Mammary epithelial cell (primary cell): ENCODE measurements at regions of chr12 and their contacts with region 1.

Region 1: DNA sequence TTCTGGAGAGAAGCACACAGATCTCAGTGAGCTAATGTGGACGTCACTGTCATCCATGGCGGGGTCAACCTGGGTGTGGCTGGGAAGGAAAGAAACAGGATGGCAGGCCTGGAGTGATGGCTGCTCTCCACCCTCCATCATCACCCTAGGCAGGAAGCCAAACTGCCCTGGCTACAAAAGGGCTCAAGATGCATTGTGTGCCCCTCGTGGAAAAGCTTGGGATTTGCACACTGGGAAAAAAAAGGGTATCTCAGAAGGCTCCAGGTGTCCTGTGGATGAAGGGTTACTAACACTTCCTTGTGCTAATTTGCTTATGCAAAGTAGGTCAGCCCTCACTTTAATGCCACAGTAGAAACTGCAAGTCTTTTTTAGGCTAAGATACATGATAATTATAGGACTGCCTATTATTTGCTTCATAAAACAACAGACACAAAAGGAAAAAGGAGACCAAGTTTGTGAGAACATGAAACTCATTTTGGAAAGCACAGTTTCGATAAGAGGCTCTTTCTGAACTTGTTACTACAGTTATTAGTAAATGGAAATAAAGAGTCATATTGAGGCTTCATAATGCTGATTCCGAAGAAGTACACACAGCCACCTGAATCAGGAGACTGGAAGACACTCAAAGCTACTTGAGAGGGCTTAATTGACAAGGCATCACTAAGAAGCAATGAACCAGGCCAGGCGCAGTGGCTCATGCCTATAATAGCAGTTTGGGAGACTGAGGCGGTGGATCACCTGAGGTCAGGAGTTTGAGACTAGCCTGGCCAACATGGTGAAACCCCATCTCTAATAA is 18.9 kb downstream of the RFC5 start:
- DNase-seq: no peak
- H3K4me3 ChIP-seq: no peak overlapping the region
- H3K27ac ChIP-seq: no peak overlapping the region
- H3K4me1 ChIP-seq: no peaks in the 10 kb centered on the region
- H3K27me3 ChIP-seq: no peaks in the 10 kb centered on the region
- CTCF ChIP-seq: peak in 1 of 2 donors; percentile 17

Region 2: DNA sequence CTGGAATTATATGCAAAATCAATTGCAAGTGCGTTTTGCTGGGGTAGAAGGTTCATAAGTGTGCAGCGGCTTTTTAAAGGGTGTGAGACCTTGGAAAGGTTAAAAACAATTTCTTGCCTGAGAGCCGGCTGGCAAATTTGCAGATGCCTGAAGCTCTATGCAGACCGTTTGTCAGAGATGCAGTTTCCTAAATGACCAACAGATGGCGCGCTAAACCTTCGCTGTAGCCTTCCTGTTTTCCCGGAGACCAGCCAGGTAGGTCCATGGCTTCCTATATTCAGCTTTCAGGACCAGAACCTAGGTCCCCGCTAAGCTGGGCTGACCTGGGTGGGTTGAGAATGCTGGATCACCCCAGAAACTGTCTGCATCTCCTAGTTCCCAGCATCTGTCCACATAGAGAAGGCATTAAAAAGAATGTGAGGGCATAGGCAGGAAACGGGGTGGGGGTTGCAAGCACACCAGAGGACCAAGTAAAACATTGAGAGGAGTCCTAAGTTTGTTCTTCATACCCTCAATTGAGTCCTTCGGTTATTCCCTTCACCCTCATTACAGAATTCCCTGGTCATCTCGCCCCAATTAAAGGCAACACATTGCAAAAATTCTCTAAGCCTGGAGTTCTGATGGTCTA is 668.3 kb before region 1 on chr12:
- CTCF ChIA-PET with region 1: no interaction called
- dilution Hi-C with region 1: no loop called
- in situ Hi-C with region 1: no loop called
- intact Hi-C with region 1: no loop called
- DNase-seq: peak; percentile 55
- H3K4me3 ChIP-seq: no peak overlapping the region
- H3K27ac ChIP-seq: no peak overlapping the region
- H3K4me1 ChIP-seq: no peaks in the 10 kb centered on the region
- H3K27me3 ChIP-seq: peaks cover 3% of the 10 kb centered on the region
- CTCF ChIP-seq: peak; percentile 91 to 93

Region 3: DNA sequence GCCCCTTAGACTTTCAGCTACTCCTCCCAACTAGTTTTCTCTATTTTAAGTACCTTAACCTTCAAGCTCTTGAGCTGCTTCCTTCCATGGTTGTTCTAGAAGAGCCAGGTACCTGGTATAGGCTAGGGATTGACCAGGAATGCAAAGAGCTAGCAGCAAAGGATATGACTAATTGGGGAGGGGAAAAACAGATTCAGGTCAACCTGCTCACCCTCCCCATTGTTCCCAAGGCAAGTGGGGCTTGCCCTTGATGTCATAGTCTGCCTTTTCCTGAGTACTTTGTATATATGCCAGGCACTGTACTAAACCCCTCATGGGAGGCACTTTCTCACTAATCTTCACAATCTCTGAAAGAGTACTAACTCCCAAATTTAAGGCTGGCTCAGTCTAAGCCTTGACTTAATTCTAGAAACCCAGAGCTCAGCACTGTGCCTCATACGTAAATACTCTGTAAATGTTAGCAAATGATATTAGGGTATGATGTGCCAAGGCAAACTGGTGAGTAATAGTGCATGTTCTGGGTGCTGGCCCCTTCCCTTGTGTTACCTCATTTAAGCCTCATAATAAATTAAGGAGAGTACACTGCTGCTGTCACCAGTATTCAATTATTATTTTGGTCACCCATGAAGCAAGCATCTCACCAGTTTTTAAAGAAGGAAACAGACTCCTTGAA is 383.1 kb after region 1 on chr12:
- CTCF ChIA-PET with region 1: no interaction called
- dilution Hi-C with region 1: no loop called
- in situ Hi-C with region 1: no loop called
- intact Hi-C with region 1: no loop called
- DNase-seq: peak; percentile 64
- H3K4me3 ChIP-seq: no peak overlapping the region
- H3K27ac ChIP-seq: peak overlapping the region; percentile 6
- H3K4me1 ChIP-seq: peaks cover 15% of the 10 kb centered on the region
- H3K27me3 ChIP-seq: no peaks in the 10 kb centered on the region
- CTCF ChIP-seq: no peak

Region 4: DNA sequence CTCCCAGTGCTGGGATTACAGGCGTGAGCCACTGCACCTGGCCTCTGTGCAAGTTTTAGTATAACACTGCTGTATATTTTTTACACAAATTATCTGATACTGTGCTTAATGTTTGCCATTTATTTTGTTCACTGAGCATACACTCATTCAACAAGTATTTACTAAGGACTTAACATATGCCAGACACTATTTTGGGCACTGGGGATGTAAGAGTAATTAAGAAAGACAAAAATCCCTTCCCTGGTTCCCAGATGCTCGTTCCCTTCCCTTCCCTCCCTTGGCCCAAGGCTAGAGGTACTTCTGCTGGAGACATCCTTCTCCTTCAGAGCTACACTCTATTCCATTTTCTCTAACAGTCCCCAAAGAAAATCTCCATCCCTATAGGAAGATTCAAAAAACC is 1829.1 kb after region 1 on chr12:
- CTCF ChIA-PET with region 1: interaction called, 12 read pairs
- dilution Hi-C with region 1: no loop called
- in situ Hi-C with region 1: no loop called
- intact Hi-C with region 1: no loop called
- DNase-seq: no peak
- H3K4me3 ChIP-seq: no peak overlapping the region
- H3K27ac ChIP-seq: no peak overlapping the region
- H3K4me1 ChIP-seq: peaks cover 10% of the 10 kb centered on the region
- H3K27me3 ChIP-seq: no peaks in the 10 kb centered on the region
- CTCF ChIP-seq: no peak